Naive thymus-derived CD4-positive, alpha-beta T cell (primary cell): ENCODE measurements at regions of chr20 and their contacts with region 1.

Region 1: GRCh38 chr20:46681032-46681854 is 8.0 kb downstream of the TP53RK start:
- DNase-seq: peak; percentile 31 to 67 (median 52)
- ATAC-seq: peak; percentile 80
- H3K4me3 ChIP-seq: no peak overlapping the region
- H3K4me3 Mint-ChIP-seq: no peak overlapping the region
- H3K27ac ChIP-seq: no peak overlapping the region
- H3K27ac Mint-ChIP-seq: peak overlapping the region in 7 of 9 donors; percentile 8 to 75 (median 61)
- H3K4me1 ChIP-seq: peaks cover 6 to 7% of the 10 kb centered on the region in 2 donors
- H3K4me1 Mint-ChIP-seq: peaks cover 25 to 51% (median 45%) of the 10 kb centered on the region in 7 donors
- H3K27me3 ChIP-seq: no peaks in the 10 kb centered on the region
- H3K27me3 Mint-ChIP-seq: no peaks in the 10 kb centered on the region

Region 2: DNA sequence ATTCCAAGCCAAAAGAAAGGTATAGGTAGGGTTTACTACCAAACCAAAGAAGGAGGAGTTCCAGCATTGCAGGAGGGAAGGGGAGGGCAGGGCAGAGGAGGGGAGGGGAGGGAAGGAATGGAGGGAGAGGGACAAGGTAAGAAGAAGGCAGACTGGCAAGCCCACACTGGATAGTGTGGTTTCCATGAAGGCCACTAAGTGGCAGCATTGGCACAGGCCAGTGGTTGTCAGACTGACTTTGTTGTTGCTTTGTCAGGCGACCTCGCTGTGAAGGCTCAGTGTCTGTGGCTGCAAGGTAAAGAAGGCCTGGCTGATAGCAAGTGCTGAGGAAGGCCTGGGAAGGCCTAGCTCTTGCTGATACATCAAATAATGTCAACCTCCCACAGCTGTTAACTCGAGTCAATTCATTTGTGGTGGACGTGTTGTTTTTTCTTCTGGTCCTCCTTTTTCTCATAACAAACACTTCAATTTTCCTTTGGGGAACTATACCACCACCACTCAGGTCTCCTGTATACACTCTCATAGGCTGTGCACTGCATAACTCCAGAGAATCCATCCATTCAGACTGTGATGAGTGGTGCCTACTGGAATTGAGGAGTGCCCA is 160.2 kb before region 1 on chr20:
- CTCF ChIA-PET with region 1: no interaction called
- POLR2A ChIA-PET with region 1: no interaction called
- intact Hi-C with region 1: loop called in 1 of 2 experiments (anchors 1 kb)
- DNase-seq: peak in 1 of 9 donors; percentile 41
- ATAC-seq: peak; percentile 75
- H3K4me3 ChIP-seq: no peak overlapping the region
- H3K4me3 Mint-ChIP-seq: no peak overlapping the region
- H3K27ac ChIP-seq: no peak overlapping the region
- H3K27ac Mint-ChIP-seq: no peak overlapping the region
- H3K4me1 ChIP-seq: no peaks in the 10 kb centered on the region
- H3K4me1 Mint-ChIP-seq: peaks cover 0 to 2% (median 0%) of the 10 kb centered on the region in 7 donors
- H3K27me3 ChIP-seq: no peaks in the 10 kb centered on the region
- H3K27me3 Mint-ChIP-seq: peaks cover 7 to 31% (median 15%) of the 10 kb centered on the region in 5 donors

Region 3: GRCh38 chr20:46545077-46545826 is 136.0 kb before region 1 on chr20:
- CTCF ChIA-PET with region 1: no interaction called
- POLR2A ChIA-PET with region 1: no interaction called
- intact Hi-C with region 1: loop called in 1 of 2 experiments (anchors 1 kb)
- DNase-seq: peak in 1 of 9 donors; percentile 49
- ATAC-seq: peak; percentile 91
- H3K4me3 ChIP-seq: no peak overlapping the region
- H3K4me3 Mint-ChIP-seq: peak overlapping the region in 1 of 10 donors; percentile 77
- H3K27ac ChIP-seq: no peak overlapping the region
- H3K27ac Mint-ChIP-seq: peak overlapping the region in 1 of 9 donors; percentile 88
- H3K4me1 ChIP-seq: peaks cover 0 to 17% of the 10 kb centered on the region in 2 donors
- H3K4me1 Mint-ChIP-seq: peaks cover 0 to 27% (median 0%) of the 10 kb centered on the region in 7 donors
- H3K27me3 ChIP-seq: no peaks in the 10 kb centered on the region
- H3K27me3 Mint-ChIP-seq: peaks cover 0 to 8% (median 0%) of the 10 kb centered on the region in 5 donors

Region 4: DNA sequence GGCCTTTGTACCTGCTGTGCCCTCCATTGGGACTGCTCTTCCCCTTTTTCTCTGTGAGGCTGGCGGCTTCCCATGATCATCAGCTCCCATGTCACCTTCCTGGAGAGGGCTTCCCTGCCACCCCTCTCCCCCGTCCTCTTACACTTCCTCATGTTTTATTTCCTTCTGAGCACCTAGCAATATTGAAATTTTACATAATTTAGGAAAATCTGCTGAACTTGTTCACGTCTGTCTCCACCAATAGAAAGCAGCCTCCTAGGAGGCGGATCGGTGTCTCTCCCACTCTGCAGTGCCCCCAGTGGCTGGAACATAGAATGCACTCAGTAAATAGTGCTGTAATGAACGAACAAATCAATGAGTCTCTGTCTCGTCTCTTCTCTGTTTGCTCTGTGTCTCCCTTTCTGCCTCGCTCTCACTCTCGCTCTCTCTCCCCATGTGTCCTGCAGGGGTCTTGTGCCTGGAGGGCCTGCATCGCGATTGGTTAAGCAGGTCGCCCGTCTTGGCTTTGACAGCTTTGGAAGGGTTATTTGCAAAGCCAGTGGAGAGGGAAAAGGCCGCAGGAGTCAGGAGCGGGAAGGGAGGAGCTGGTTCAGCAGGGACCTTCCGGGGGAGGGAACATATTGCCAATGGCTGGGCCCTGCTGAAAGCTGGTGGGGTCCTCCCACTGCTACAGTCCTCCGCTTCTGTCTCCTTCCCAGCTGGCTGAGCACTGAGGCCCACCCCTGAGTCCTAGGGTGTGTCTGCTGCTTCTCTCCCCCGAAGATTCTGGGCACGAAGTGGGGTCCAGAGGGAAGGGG is 118.7 kb before region 1 on chr20:
- CTCF ChIA-PET with region 1: no interaction called
- POLR2A ChIA-PET with region 1: no interaction called
- intact Hi-C with region 1: loop called in 1 of 2 experiments (anchors 1 kb)
- DNase-seq: peak in 7 of 9 donors; percentile 16 to 66 (median 30)
- ATAC-seq: peak; percentile 95
- H3K4me3 ChIP-seq: peak overlapping the region; percentile 34
- H3K4me3 Mint-ChIP-seq: no peak overlapping the region
- H3K27ac ChIP-seq: no peak overlapping the region
- H3K27ac Mint-ChIP-seq: no peak overlapping the region
- H3K4me1 ChIP-seq: peaks cover 3 to 7% of the 10 kb centered on the region in 2 donors
- H3K4me1 Mint-ChIP-seq: peaks cover 0 to 28% (median 0%) of the 10 kb centered on the region in 7 donors
- H3K27me3 ChIP-seq: no peaks in the 10 kb centered on the region
- H3K27me3 Mint-ChIP-seq: peaks cover 3 to 15% (median 4%) of the 10 kb centered on the region in 5 donors

Region 5: DNA sequence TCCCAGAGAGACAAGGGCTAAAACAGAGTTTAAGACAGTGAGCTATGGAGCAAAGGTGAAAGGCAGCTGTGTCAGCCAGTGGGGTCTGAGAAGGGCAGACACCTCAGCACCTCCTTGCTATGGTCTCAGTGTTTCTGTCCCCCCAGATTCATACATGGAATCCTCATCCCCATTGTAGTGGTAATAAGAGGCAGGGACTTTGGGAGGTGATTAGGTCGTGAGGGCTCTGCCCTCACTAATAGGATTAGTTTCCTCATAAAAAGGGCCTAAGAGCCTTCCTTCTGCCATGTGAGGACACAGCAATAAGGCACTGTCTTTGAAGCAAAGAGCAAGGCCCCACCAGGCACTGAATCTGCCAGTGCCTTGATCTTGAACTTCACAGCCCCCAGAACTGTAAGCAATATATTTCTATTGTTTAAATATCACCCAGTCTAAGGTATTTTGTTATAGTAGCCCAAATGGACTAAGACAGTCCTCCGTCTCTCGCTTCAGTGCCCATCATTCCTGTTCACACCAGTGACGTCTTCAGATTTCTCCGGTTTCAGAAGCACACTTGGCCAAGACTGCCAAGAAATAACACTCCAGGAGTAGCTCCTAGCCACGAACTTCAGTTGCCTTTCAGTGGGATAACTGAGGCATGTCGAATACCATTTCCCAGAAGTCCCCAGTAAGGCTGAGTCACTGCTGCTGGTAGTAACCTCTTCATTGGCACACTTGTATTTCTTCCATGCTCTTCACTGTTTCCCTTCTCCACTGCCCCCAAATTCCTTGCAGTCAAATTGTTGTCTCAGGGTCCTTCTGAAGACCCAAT is 62.7 kb before region 1 on chr20:
- CTCF ChIA-PET with region 1: no interaction called
- POLR2A ChIA-PET with region 1: no interaction called
- intact Hi-C with region 1: no loop called
- DNase-seq: no peak
- ATAC-seq: no peak
- H3K4me3 ChIP-seq: no peak overlapping the region
- H3K4me3 Mint-ChIP-seq: no peak overlapping the region
- H3K27ac ChIP-seq: no peak overlapping the region
- H3K27ac Mint-ChIP-seq: no peak overlapping the region
- H3K4me1 ChIP-seq: no peaks in the 10 kb centered on the region
- H3K4me1 Mint-ChIP-seq: no peaks in the 10 kb centered on the region
- H3K27me3 ChIP-seq: no peaks in the 10 kb centered on the region
- H3K27me3 Mint-ChIP-seq: peaks cover 0 to 43% (median 26%) of the 10 kb centered on the region in 5 donors